ENCODE measurements at regions of chr1 and their contacts with region 1.

Region 1: GRCh38 chr1:33378976-33379375 is 51.9 kb downstream of the PHC2 start:
- DNase-seq: no peak
- ATAC-seq: no peak
- H3K4me3 ChIP-seq: no peak overlapping the region
- H3K27ac ChIP-seq: no peak overlapping the region
- H3K4me1 ChIP-seq: peaks cover 0 to 6% (median 0%) of the 10 kb centered on the region in 3 donors
- H3K27me3 ChIP-seq: no peaks in the 10 kb centered on the region
- CTCF ChIP-seq: no peak

Region 2: DNA sequence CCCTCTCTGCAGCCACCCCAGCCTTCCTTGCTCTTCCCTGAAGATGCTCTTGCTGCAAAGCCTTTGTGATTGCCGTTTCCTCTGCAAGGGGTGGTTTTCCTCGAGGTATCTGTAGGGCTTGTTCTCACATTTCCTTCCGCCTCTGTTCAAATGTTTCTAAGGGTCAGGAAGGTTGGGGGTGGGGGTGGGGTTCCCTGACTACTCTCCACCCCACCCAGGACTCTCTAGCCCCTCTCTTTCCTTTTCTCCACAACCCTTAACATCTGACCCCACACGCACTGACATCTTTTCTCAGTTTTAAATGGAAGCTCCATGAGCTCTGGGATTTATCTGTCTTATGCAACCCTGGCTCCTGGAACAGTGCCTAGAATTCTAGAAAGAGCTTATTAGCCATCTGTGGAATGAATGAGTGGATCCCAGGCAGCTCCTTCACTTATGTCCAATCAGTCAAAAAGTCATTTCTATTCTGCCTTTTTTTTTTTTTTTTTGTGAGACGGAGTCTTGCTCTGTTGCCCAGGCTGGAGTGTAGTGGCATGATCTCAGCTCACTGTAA is 150.0 kb before region 1 on chr1:
- intact Hi-C with region 1: loop called in 1 of 3 experiments (anchors 10 kb)
- DNase-seq: no peak
- ATAC-seq: peak in 3 of 4 donors; percentile 39 to 53 (median 51)
- H3K4me3 ChIP-seq: no peak overlapping the region
- H3K27ac ChIP-seq: no peak overlapping the region
- H3K4me1 ChIP-seq: no peaks in the 10 kb centered on the region
- H3K27me3 ChIP-seq: no peaks in the 10 kb centered on the region
- CTCF ChIP-seq: no peak

Measured in pancreas (tissue), 10 donors.